Common myeloid progenitor, CD34-positive (primary cell): ENCODE measurements at regions of chr13 and their contacts with region 1.

Region 1: GRCh38 chr13:100573121-100573520 is 15.5 kb downstream of the GGACT start:
- DNase-seq: peak; percentile 80 to 87 (median 83)
- H3K4me3 ChIP-seq: no peak overlapping the region
- H3K27ac ChIP-seq: no peak overlapping the region
- H3K4me1 ChIP-seq: no peaks in the 10 kb centered on the region
- H3K27me3 ChIP-seq: no peaks in the 10 kb centered on the region

Region 2: GRCh38 chr13:100560498-100561157 is 12.5 kb before region 1 on chr13:
- CTCF ChIA-PET with region 1: interaction called, 22 read pairs
- POLR2A ChIA-PET with region 1: no interaction called
- DNase-seq: no peak
- H3K4me3 ChIP-seq: no peak overlapping the region
- H3K27ac ChIP-seq: no peak overlapping the region
- H3K4me1 ChIP-seq: no peaks in the 10 kb centered on the region
- H3K27me3 ChIP-seq: no peaks in the 10 kb centered on the region

Region 3: DNA sequence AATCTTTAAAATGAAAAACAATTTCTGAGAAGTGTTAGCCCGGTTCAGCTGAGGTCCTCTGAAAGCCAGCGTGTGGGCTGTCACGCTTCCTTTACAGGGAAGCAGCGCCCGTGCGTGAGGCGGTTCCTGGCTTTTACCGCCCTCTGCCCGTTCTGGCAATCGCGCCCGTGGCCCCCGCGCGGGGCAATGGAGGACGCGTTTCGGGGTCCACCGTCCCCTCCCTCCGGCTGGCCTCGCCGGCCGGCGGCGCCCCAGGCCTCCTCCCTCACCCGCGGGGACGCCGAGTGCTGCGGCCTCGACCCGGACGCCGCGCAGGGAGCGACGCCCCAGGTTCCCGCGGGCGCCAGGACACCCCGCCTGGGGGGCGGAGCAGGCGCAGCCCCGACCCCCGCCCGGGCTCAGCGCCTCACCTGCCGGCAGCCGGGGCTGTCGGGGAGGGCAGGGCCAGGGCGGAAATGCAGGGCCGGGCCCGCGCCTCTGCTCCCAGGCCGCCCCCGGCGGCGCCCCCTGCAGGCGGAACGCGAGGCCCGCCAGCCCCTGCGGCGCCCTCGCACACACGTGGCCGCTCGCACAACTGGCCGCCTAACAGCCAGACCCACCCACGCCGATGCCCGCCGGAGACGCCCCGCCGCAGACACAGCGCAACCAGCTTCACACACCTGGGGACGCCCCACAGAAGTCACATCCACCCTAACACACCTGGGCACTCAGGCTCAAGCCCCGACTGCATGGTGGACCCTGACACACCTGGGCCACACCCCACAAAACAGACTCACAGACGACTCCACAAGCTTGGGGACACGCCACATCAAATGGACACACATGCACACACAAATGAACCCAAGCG is 15.4 kb after region 1 on chr13 and contains the start of gene GGACT:
- CTCF ChIA-PET with region 1: interaction called, 53 read pairs
- POLR2A ChIA-PET with region 1: no interaction called
- DNase-seq: peak; percentile 73 to 85 (median 83)
- H3K4me3 ChIP-seq: peak within 1 kb of the TSS; percentile 9 to 84 (median 77)
- H3K27ac ChIP-seq: peak within 1 kb of the TSS; percentile 25 to 73
- H3K4me1 ChIP-seq: peaks cover 2 to 18% (median 8%) of the 10 kb centered on the region in 4 experiments
- H3K27me3 ChIP-seq: no peaks in the 10 kb centered on the region

Region 4: GRCh38 chr13:100767192-100767591 is 194.1 kb after region 1 on chr13:
- CTCF ChIA-PET with region 1: no interaction called
- POLR2A ChIA-PET with region 1: no interaction called
- DNase-seq: no peak
- H3K4me3 ChIP-seq: no peak overlapping the region
- H3K27ac ChIP-seq: no peak overlapping the region
- H3K4me1 ChIP-seq: no peaks in the 10 kb centered on the region
- H3K27me3 ChIP-seq: no peaks in the 10 kb centered on the region

Region 5: DNA sequence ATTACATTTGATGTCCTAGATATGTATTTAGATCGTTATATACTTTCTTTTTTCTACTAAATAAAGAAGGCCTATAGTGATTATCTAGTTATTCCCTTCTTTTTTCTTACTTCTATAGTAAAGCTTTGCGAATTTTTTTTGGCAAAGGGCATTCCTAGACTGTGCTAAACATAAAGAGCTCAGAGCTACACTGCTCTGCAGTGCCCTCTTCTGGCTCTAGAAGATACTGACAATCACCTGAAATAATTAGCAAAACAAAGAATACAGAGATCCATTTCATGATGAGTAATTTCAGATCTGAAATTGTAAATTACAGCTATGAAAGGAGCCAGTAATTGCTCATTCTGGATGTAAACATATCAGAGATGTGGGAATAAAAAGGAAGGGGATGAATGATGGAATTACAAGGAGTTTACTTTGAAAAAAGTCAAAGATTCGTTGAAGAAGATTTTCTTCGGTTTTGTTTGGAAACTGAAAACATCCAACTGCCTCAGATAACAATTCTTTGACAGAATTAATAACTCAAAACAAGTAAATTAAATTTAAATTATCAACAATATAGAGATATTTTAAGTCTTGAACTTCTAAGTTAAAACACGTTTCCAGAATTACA is 554.7 kb after region 1 on chr13:
- CTCF ChIA-PET with region 1: interaction called, 12 read pairs
- POLR2A ChIA-PET with region 1: no interaction called
- DNase-seq: peak; percentile 25 to 62 (median 42)
- H3K4me3 ChIP-seq: no peak overlapping the region
- H3K27ac ChIP-seq: no peak overlapping the region
- H3K4me1 ChIP-seq: no peaks in the 10 kb centered on the region
- H3K27me3 ChIP-seq: no peaks in the 10 kb centered on the region